ENCODE measurements at regions of chr1 and their contacts with region 1.

Region 1: DNA sequence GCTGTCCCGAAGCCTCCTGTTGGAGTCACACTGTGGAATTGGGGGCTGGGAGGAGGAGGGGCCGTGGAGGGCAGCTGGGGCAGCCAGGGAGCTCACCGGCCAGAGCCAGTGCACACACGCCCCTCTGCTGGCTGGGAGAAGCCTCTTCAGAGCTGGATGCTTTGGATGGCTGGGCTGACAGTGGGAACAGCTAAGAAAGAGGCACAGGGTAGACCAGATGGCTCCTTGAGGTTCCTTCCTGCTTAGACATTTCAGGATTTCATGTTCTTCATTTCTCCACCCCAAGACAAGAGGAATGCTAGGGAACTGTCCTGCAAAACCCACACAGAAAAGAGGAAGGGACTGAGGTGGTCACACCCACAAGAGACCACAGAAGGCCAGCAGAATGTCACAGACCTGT is 254.8 kb upstream of the VAMP3 start:
- DNase-seq: no peak
- ATAC-seq: peak; percentile 48 to 57

Region 2: GRCh38 chr1:7224644-7225043 is 291.7 kb before region 1 on chr1:
- intact Hi-C with region 1: no loop called
- DNase-seq: no peak
- ATAC-seq: no peak

Region 3: GRCh38 chr1:7366955-7367665 is 149.2 kb before region 1 on chr1:
- intact Hi-C with region 1: loop called in 1 of 2 experiments (anchors 5 kb)
- DNase-seq: no peak
- ATAC-seq: peak in 1 of 2 donors; percentile 15

Region 4: GRCh38 chr1:7454052-7454815 is 62.1 kb before region 1 on chr1:
- intact Hi-C with region 1: loop called in 1 of 2 experiments (anchors 10 kb)
- DNase-seq: no peak
- ATAC-seq: peak; percentile 44 to 57

Measured in left cardiac atrium (tissue), 4 donors.